B cell (primary cell): ENCODE measurements at regions of chr14 and their contacts with region 1.

Region 1: GRCh38 chr14:22536853-22537338 is 52.1 kb downstream of the DAD1 start:
- DNase-seq: no peak
- ATAC-seq: peak; percentile 96
- H3K4me3 ChIP-seq: no peak overlapping the region
- H3K4me3 Mint-ChIP-seq: peak overlapping the region; percentile 54
- H3K27ac ChIP-seq: no peak overlapping the region
- H3K27ac Mint-ChIP-seq: peak overlapping the region; percentile 81
- H3K4me1 ChIP-seq: peaks cover 34 to 43% of the 10 kb centered on the region in 2 donors
- H3K4me1 Mint-ChIP-seq: peaks cover 77% of the 10 kb centered on the region
- H3K27me3 ChIP-seq: no peaks in the 10 kb centered on the region
- H3K27me3 Mint-ChIP-seq: no peaks in the 10 kb centered on the region
- CTCF ChIP-seq: no peak

Region 2: GRCh38 chr14:22505697-22506377 is 31.1 kb before region 1 on chr14:
- CTCF ChIA-PET with region 1: no interaction called
- POLR2A ChIA-PET with region 1: interaction called, 3 read pairs
- intact Hi-C with region 1: loop called (anchors 5 kb)
- DNase-seq: no peak
- ATAC-seq: peak; percentile 29
- H3K4me3 ChIP-seq: peak overlapping the region in 1 of 5 experiments; percentile 6
- H3K4me3 Mint-ChIP-seq: peak overlapping the region; percentile 74
- H3K27ac ChIP-seq: peak overlapping the region; percentile 38 to 52
- H3K27ac Mint-ChIP-seq: peak overlapping the region; percentile 97
- H3K4me1 ChIP-seq: peaks cover 42 to 58% of the 10 kb centered on the region in 2 donors
- H3K4me1 Mint-ChIP-seq: peaks cover 77% of the 10 kb centered on the region
- H3K27me3 ChIP-seq: no peaks in the 10 kb centered on the region
- H3K27me3 Mint-ChIP-seq: no peaks in the 10 kb centered on the region
- CTCF ChIP-seq: no peak

Region 3: GRCh38 chr14:22641846-22642245 is 105.0 kb after region 1 on chr14:
- CTCF ChIA-PET with region 1: no interaction called
- POLR2A ChIA-PET with region 1: no interaction called
- intact Hi-C with region 1: no loop called
- DNase-seq: no peak
- ATAC-seq: no peak
- H3K4me3 ChIP-seq: no peak overlapping the region
- H3K4me3 Mint-ChIP-seq: no peak overlapping the region
- H3K27ac ChIP-seq: no peak overlapping the region
- H3K27ac Mint-ChIP-seq: no peak overlapping the region
- H3K4me1 ChIP-seq: no peaks in the 10 kb centered on the region
- H3K4me1 Mint-ChIP-seq: no peaks in the 10 kb centered on the region
- H3K27me3 ChIP-seq: peaks cover 0 to 2% (median 0%) of the 10 kb centered on the region in 4 experiments
- H3K27me3 Mint-ChIP-seq: peaks cover 6% of the 10 kb centered on the region
- CTCF ChIP-seq: no peak

Region 4: GRCh38 chr14:22657861-22658260 is 121.0 kb after region 1 on chr14:
- CTCF ChIA-PET with region 1: no interaction called
- POLR2A ChIA-PET with region 1: no interaction called
- intact Hi-C with region 1: no loop called
- DNase-seq: peak; percentile 19
- ATAC-seq: no peak
- H3K4me3 ChIP-seq: no peak overlapping the region
- H3K4me3 Mint-ChIP-seq: no peak overlapping the region
- H3K27ac ChIP-seq: no peak overlapping the region
- H3K27ac Mint-ChIP-seq: no peak overlapping the region
- H3K4me1 ChIP-seq: no peaks in the 10 kb centered on the region
- H3K4me1 Mint-ChIP-seq: no peaks in the 10 kb centered on the region
- H3K27me3 ChIP-seq: no peaks in the 10 kb centered on the region
- H3K27me3 Mint-ChIP-seq: no peaks in the 10 kb centered on the region
- CTCF ChIP-seq: no peak